ENCODE measurements at regions of chr18 and their contacts with region 1.

Region 1: DNA sequence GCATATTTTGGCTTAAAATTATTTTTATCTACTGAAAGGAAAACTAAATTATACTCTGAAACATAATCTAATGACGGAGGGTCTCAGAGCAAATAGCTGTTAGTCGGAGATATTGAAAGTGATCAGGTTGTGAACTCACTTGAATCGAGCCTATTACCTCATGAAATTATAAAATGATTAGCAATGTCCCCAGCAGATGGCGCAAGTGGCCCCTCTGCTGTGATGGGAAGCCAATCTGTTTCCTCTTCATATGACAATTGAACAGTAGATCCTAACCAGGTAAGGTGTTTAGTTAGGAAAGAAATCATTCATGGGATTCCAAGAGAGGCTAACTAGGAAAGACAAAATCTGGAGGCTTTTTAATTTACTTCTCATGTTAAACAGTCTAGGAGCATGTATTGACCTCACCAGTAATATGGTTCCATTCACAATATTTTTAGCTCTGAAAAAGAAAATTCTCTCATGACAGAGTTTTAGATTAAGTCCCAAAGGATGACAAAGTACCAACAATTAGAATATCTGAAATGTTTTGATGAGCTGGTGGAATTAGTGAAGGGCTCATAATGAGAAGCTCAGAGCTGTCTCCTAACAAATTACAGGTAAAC is 29.9 kb upstream of the MPPE1 start:
- DNase-seq: peak; percentile 73 to 79
- H3K4me3 ChIP-seq: no peak overlapping the region
- H3K27ac ChIP-seq: no peak overlapping the region
- H3K4me1 ChIP-seq: no peaks in the 10 kb centered on the region
- H3K27me3 ChIP-seq: no peaks in the 10 kb centered on the region
- CTCF ChIP-seq: peak; percentile 82 to 85

Region 2: DNA sequence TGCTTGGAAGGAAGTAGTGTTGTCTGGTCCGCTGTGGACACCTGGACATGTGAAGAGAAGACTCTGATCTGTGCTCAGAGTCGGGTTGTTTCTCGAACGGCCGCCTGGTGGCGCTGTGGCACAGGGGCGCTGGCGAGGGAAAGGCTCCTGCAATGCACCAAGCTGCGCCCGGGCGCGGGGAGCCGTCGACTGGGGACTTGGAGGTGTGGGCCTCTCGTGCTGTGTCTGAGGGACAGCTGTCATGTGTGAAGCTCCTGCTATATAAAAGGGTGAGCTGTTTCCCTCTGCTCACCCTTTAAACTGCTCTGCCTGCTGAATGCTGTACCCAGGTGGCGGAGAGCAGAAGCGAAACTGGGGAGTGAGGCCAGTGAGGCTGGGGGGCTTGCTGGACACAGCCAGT is 204.9 kb before region 1 on chr18:
- intact Hi-C with region 1: loop called (anchors 10 kb)
- DNase-seq: peak; percentile 70 to 84
- H3K4me3 ChIP-seq: no peak overlapping the region
- H3K27ac ChIP-seq: no peak overlapping the region
- H3K4me1 ChIP-seq: no peaks in the 10 kb centered on the region
- H3K27me3 ChIP-seq: peaks cover 0 to 2% of the 10 kb centered on the region in 2 donors
- CTCF ChIP-seq: peak; percentile 71 to 88

Region 3: GRCh38 chr18:11840493-11840892 is 97.5 kb before region 1 on chr18:
- intact Hi-C with region 1: no loop called
- DNase-seq: no peak
- H3K4me3 ChIP-seq: no peak overlapping the region
- H3K27ac ChIP-seq: no peak overlapping the region
- H3K4me1 ChIP-seq: no peaks in the 10 kb centered on the region
- H3K27me3 ChIP-seq: no peaks in the 10 kb centered on the region
- CTCF ChIP-seq: no peak

Region 4: DNA sequence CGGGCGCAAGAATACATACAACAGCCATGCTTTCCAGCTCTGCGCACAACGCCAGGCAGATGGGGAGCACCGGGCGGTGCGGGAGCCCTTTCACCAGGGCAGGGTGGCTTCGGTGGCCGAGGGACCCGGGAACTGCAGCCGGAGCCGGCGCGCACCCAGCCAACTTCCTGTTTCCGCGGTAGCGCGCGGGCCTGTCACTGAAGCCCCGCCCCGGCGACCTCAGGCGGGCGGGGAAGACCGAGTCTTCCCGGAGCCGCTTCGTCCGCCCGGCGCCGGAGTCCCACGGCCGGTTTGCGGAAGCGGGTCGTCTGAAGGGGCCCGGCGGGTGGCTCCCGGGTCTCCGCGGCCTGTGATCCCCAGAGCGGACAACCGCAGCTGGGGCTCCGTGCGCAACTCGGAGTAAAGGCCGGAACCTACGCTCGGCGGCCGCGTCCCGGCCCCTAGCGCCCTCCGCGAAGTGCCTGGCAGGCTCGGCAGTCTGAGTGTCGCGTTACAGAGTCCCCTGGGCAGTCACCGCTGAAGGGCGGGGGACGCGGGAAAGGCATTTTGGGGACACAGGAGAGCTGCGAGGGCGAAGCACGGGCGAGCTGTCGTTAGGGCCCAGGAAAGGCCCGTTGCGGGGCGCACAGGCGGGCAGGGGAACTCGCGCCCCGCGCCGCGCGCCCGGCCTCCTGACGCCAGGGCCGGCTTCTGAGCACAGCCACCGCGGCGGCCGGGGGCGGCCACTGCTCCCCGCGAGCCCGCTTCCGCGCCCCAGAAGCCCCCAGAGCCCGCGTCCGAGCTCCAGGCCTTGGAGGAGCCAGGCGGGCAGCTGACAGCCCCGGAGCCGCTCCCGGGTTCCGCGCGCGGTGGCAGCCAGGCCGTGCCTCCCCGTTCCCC is 29.6 kb before region 1 on chr18 and contains the start of gene MPPE1:
- intact Hi-C with region 1: no loop called
- DNase-seq: peak; percentile 87 to 94
- H3K4me3 ChIP-seq: peak within 1 kb of the TSS; percentile 78 to 97
- H3K27ac ChIP-seq: peak within 1 kb of the TSS; percentile 99 to 100
- H3K4me1 ChIP-seq: peaks cover 0 to 19% (median 12%) of the 10 kb centered on the region in 4 donors
- H3K27me3 ChIP-seq: no peaks in the 10 kb centered on the region
- CTCF ChIP-seq: no peak

Region 5: DNA sequence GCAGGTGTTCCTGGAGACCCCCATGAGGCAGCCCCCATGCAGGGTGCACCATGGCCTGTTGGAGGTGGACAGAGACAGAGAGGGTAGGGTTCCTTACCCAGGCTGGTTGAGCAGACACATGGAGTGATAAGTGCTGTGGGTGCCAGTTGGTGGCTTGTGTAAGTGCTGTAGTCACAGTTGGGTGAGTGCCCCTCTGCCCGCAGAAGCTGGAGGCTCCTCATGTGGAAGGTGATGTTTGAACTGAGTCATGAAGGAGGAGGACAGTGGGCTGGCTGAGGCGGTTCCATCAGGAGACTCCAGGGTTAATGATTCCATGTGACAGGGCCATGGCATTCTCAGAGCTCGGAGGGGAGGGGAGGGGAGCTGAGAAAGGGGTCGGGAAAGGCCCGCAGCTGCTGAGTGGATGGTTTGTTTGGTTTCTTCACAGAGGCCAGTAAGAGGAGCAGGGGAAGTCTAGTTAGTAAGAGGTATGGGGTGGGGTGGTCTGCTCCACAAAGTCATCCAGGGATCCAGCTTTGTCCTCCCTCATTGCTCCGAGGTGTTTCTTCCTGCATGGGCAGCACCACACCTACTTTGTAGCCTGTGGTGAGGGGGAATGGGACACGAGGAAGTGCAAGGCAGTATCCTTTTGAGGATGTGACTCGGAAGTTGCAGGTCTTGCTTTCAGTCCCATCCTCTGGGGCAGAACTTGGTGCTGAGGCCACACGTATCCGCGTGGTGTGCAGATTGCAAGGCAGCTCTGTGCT is 56.9 kb after region 1 on chr18:
- intact Hi-C with region 1: loop called (anchors 5 kb)
- DNase-seq: peak in 1 of 2 donors; percentile 56
- H3K4me3 ChIP-seq: no peak overlapping the region
- H3K27ac ChIP-seq: no peak overlapping the region
- H3K4me1 ChIP-seq: peaks cover 0 to 11% (median 4%) of the 10 kb centered on the region in 4 donors
- H3K27me3 ChIP-seq: no peaks in the 10 kb centered on the region
- CTCF ChIP-seq: no peak

Region 6: DNA sequence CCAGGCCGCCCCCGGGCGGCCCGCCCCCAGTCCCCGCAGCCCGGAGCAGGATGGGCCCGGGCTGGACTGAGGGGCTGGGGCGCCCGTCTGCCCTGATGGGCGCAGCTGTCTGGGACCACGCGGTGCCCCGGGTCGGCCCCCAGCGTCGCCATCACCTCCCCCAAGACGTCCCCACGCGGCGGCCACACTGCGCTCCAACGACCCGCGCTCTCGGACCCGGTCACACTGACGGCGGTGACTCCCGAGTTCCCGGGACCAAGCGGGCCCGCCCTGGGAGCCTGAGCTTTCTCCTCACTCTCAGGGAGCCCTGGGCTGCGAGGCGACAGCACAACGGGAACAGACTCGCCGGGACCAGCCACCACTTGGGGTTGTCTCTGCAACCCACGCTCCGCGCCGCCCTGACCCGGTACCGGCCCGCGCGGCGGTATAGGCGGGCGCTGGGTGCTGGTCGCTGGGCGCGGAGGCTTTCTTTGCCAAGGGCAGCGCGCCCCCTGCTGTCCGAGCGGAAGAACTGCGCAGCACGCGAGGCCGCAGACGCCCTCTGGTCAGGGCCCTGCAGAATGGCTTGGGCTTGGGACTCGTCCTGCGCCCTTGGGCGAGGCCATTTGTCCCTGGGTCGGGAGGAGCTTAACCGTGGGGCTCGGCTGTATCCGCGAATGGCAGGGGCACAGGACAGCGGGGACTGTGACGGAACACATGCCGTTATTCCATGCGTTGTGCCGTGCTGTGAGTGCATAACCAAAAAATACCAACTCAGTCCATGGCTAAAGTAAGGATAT is 100.9 kb after region 1 on chr18:
- intact Hi-C with region 1: loop called (anchors 2 kb)
- DNase-seq: peak; percentile 79 to 88
- H3K4me3 ChIP-seq: peak overlapping the region; percentile 52 to 68
- H3K27ac ChIP-seq: peak overlapping the region; percentile 11 to 45
- H3K4me1 ChIP-seq: peaks cover 0 to 13% (median 10%) of the 10 kb centered on the region in 4 donors
- H3K27me3 ChIP-seq: no peaks in the 10 kb centered on the region
- CTCF ChIP-seq: peak; percentile 96 to 98